MCF 10A (cell line): ENCODE measurements at regions of chr3 and their contacts with region 1.

Region 1: DNA sequence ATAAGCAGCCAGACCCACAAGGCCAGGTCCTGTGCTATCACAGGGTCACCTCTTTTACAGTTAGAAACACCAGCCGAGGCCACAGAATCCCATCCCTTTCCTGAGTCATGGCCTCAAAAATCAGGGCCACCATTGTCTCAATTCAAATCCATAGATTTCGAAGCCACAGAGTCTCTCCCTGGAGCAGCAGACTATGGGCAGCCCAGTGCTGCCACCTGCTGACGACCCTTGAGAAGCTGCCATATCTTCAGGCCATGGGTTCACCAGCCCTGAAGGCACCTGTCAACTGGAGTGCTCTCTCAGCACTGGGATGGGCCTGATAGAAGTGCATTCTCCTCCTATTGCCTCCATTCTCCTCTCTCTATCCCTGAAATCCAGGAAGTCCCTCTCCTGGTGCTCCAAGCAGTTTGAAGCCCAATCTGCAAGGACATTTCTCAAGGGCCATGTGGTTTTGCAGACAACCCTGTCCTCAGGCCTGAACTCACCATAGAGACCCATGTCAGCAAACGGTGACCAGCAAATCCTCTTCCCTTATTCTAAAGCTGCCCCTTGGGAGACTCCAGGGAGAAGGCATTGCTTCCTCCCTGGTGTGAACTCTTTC is 39.6 kb downstream of the TGM4 start:
- DNase-seq: peak; percentile 84
- H3K4me3 Mint-ChIP-seq: no peak overlapping the region
- H3K27ac Mint-ChIP-seq: no peak overlapping the region
- H3K4me1 Mint-ChIP-seq: peaks cover 14% of the 10 kb centered on the region
- H3K27me3 Mint-ChIP-seq: no peaks in the 10 kb centered on the region
- CTCF ChIP-seq: peak; percentile 79

Region 2: DNA sequence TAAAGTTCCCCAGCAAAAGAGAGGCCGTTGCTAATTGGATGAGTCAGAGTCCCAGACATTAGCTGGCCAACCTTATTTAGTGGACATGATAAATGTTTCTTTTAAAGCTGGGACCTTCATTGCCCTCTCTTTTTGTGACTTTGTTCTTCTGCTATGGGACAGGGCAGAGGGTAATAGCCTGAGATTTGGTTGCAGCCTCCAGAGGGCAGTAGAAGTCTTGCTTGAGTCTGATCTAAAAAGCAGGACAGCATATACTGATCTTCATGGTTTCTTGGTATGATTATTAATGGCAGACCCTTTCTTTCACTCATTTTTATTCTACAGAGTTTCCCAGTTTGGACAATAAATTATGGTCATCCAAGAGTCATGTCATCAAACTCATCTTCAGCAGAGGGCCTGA is 384.0 kb before region 1 on chr3:
- CTCF ChIA-PET with region 1: interaction called, 23 read pairs
- POLR2A ChIA-PET with region 1: interaction called, 3 read pairs
- intact Hi-C with region 1: loop called (anchors 1 kb)
- DNase-seq: peak; percentile 3
- H3K4me3 Mint-ChIP-seq: no peak overlapping the region
- H3K27ac Mint-ChIP-seq: no peak overlapping the region
- H3K4me1 Mint-ChIP-seq: no peaks in the 10 kb centered on the region
- H3K27me3 Mint-ChIP-seq: peaks cover 37% of the 10 kb centered on the region
- CTCF ChIP-seq: no peak

Region 3: DNA sequence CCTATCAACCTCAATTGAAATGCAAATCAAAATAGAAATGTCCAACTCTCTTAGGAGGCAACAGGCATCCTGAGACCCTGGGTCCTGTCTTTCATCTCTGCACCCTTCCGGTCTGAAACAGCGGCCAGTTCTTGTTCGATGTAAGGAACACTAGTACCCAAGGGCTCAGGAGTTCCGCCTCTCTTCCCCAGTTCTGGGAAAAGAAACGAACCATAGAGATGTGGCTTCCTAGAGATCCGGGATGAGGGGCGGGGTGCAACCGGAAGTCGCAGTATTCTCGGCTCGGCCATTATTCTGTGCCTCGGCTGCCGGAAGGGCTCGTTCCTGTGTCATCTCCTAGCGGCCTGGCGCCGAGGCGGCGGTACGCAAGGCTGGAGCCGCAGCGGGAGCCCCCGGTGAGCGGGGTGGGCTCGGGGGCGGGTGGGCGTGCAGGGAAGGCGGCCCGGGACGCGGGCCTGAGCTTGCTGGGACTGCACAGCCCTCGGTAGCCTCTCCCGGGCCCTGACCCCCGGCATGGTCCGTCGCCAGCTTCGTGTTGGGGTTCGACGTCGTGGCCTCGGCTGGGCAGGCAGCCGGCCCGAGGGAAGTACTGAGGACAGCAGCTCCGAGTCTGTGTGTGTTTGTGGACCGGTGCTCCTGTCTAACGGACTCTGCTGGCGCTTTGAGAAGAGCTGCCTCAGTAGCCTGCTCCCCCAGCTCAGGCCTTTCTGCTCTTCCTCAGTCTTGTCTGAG is 289.1 kb before region 1 on chr3 and contains the start of gene ZNF197:
- CTCF ChIA-PET with region 1: interaction called, 4 read pairs
- POLR2A ChIA-PET with region 1: interaction called, 13 read pairs
- intact Hi-C with region 1: loop called (anchors 1 kb)
- DNase-seq: peak; percentile 91
- H3K4me3 Mint-ChIP-seq: peak within 1 kb of the TSS; percentile 85
- H3K27ac Mint-ChIP-seq: peak within 1 kb of the TSS; percentile 80
- H3K4me1 Mint-ChIP-seq: peaks cover 16% of the 10 kb centered on the region
- H3K27me3 Mint-ChIP-seq: no peaks in the 10 kb centered on the region
- CTCF ChIP-seq: no peak
- total RNA-seq, gene ZNF197: 15.6 and 15.8 TPM in 2 replicates

Region 4: GRCh38 chr3:44734646-44735168 is 179.3 kb before region 1 on chr3:
- CTCF ChIA-PET with region 1: no interaction called
- POLR2A ChIA-PET with region 1: no interaction called
- intact Hi-C with region 1: no loop called
- DNase-seq: no peak
- H3K4me3 Mint-ChIP-seq: no peak overlapping the region
- H3K27ac Mint-ChIP-seq: no peak overlapping the region
- H3K4me1 Mint-ChIP-seq: no peaks in the 10 kb centered on the region
- H3K27me3 Mint-ChIP-seq: no peaks in the 10 kb centered on the region
- CTCF ChIP-seq: no peak

Region 5: DNA sequence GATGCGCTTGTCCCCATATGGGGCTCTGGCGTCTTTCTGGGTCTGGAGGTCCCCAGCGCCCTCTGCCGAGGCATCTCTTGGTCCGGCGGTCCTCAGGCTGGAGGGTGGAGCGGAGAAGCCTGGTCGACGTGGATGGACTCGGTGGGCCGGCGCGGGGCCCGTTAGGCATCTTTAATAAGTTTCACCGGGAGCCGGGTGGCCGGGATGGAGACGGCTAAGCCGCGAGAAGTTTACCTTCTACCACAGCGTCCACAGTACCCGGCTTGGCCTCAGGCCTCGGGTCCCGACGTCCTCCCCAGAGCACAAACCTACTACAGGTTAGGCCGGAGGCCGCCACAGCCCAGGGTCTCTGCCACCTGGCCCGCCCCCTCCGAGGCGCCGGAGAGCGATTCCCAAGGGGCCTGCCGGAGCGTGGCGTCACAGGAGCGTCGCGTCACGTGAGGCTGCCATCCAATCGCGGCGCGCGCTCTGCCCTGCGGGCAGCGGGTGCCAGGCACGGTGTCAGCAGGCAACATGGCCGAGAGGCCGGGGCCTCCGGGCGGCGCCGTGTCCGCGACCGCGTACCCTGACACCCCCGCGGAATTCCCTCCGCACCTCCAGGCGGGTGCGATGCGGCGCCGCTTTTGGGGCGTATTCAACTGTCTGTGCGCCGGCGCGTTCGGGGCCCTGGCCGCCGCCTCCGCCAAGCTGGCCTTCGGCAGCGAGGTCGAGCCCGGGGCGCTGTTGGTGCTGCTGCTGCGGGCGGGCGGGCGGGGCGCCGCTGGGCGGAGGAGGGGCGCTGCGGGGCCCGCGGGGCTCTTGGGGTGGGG is 52.4 kb before region 1 on chr3 and contains the start of gene TMEM42:
- CTCF ChIA-PET with region 1: interaction called, 3 read pairs
- POLR2A ChIA-PET with region 1: no interaction called
- intact Hi-C with region 1: loop called (anchors 2 kb)
- DNase-seq: peak; percentile 79
- H3K4me3 Mint-ChIP-seq: peak within 1 kb of the TSS; percentile 78
- H3K27ac Mint-ChIP-seq: peak within 1 kb of the TSS; percentile 79
- H3K4me1 Mint-ChIP-seq: no peaks in the 10 kb centered on the region
- H3K27me3 Mint-ChIP-seq: no peaks in the 10 kb centered on the region
- CTCF ChIP-seq: no peak
- total RNA-seq, gene TMEM42: 27.6 and 27.8 TPM in 2 replicates

Region 6: GRCh38 chr3:45064512-45065372 is 150.8 kb after region 1 on chr3:
- CTCF ChIA-PET with region 1: no interaction called
- POLR2A ChIA-PET with region 1: no interaction called
- intact Hi-C with region 1: no loop called
- DNase-seq: peak; percentile 62
- H3K4me3 Mint-ChIP-seq: no peak overlapping the region
- H3K27ac Mint-ChIP-seq: no peak overlapping the region
- H3K4me1 Mint-ChIP-seq: peaks cover 10% of the 10 kb centered on the region
- H3K27me3 Mint-ChIP-seq: no peaks in the 10 kb centered on the region
- CTCF ChIP-seq: no peak